ENCODE measurements at regions of chr15 and their contacts with region 1.

Region 1: DNA sequence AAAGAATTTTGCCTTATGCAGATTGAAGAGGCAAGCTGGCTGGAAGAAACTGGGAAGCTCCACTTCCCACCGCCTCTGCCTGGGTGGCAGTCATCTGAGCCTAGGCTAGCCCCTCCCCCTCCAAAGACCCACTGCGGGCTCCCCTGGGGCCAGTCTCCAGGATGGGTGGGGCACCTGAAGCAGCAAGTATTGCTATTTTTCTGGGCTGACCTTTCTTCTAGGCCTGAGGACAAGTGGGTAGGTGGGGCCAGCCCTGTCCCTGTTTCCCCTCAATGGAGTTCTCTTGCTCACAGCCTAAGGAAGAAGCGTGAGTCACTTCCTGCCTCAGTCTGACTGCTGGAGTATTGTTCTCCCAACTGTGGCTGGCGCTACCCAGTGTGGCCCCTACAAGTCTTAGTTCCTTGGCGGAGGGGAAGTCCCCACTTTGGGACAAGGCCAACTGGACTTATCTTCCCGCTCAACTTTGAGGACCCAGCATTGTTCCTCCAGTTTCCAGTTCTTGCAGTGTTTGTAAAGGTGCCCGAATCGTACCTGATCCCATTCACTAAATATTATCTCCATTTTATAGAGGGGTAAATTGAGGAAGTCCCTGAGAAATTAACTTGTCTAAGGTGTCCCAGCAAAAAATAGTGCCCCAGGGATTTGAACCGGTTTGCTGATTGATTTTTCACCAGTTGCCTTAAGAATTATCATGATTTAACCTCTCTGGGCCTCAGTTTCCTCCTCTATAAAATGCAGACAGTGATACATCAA is 1.4 kb downstream of the FURIN start:
- DNase-seq: peak in 1 of 2 experiments; percentile 76
- H3K4me3 ChIP-seq: no peak overlapping the region
- H3K27ac ChIP-seq: peak overlapping the region; percentile 16; the same call in 1 of the 2 replicates
- H3K4me1 ChIP-seq: peaks cover 23 to 47% (median 30%) of the 10 kb centered on the region in 4 experiments
- H3K27me3 ChIP-seq: no peaks in the 10 kb centered on the region
- CTCF ChIP-seq: no peak
- EP300 ChIP-seq: no peak
- POLR2A ChIP-seq: no peak
- RAD21 ChIP-seq: no peak

Region 2: GRCh38 chr15:90839187-90840071 is 30.3 kb before region 1 on chr15:
- CTCF ChIA-PET with region 1: interaction called, 5 read pairs
- POLR2A ChIA-PET with region 1: interaction called, 12 read pairs
- DNase-seq: peak; percentile 75 to 85
- H3K4me3 ChIP-seq: peak overlapping the region in 3 of 4 experiments; percentile 15 to 30 (median 26); a peak in 3 of 8 replicates
- H3K27ac ChIP-seq: no peak overlapping the region
- H3K4me1 ChIP-seq: peaks cover 6 to 21% (median 18%) of the 10 kb centered on the region in 4 experiments
- H3K27me3 ChIP-seq: no peaks in the 10 kb centered on the region
- CTCF ChIP-seq: no peak; a peak in 1 of 4 replicates
- EP300 ChIP-seq: no peak; a peak in 1 of 3 replicates
- POLR2A ChIP-seq: 0 out of 3 replicates have a peak, but pooled peaks of 1 of the 2 experiments have one; percentile 34
- RAD21 ChIP-seq: no peak; a peak in 1 of 4 replicates

Region 3: GRCh38 chr15:90851114-90851513 is 18.7 kb before region 1 on chr15:
- CTCF ChIA-PET with region 1: interaction called, 12 read pairs
- POLR2A ChIA-PET with region 1: interaction called, 3 read pairs
- DNase-seq: no peak
- H3K4me3 ChIP-seq: no peak overlapping the region
- H3K27ac ChIP-seq: no peak overlapping the region
- H3K4me1 ChIP-seq: no peaks in the 10 kb centered on the region
- H3K27me3 ChIP-seq: no peaks in the 10 kb centered on the region
- CTCF ChIP-seq: no peak
- EP300 ChIP-seq: no peak
- POLR2A ChIP-seq: no peak
- RAD21 ChIP-seq: no peak

Region 4: DNA sequence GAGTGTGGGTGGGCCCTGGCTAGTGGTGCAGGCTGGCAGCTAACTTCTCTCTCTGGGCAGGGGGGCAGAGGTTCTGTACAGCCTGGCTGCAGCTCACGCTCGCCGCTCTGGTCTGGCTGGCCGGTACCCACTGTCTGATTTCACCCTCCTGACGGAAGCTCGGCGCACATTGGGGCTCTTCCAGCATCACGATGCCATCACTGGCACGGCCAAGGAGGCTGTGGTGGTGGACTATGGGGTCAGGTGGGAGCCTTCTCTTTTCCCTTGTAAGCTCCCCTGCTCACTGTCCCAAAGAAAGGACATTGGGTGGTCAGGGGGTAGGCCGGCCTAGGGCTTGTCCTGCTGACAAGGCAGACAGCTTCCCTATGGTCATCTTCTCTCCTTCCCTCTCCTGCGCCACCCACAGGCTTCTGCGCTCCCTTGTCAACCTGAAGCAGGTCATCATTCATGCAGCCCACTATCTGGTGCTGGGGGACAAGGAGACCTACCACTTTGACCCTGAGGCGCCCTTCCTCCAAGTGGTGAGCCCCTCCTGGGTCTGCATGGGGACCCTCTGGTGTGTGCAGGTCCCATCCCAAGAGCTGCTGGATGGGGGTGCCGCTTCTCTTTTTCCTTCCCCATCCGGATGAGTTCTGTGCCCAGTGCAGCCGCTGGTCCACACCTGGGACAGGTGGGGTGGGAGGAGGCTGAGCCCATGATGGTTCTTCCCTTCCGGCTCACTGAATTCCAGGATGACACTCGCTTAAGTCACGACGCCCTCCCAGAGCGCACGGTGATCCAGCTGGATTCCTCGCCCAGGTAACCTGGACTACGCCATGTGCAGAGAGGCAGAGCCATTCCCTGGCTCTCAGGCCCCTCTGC is 40.9 kb after region 1 on chr15:
- CTCF ChIA-PET with region 1: no interaction called
- POLR2A ChIA-PET with region 1: no interaction called
- DNase-seq: no peak
- H3K4me3 ChIP-seq: no peak overlapping the region
- H3K27ac ChIP-seq: no peak overlapping the region
- H3K4me1 ChIP-seq: no peaks in the 10 kb centered on the region
- H3K27me3 ChIP-seq: no peaks in the 10 kb centered on the region
- CTCF ChIP-seq: no peak
- EP300 ChIP-seq: no peak
- POLR2A ChIP-seq: no peak
- RAD21 ChIP-seq: no peak

Region 5: DNA sequence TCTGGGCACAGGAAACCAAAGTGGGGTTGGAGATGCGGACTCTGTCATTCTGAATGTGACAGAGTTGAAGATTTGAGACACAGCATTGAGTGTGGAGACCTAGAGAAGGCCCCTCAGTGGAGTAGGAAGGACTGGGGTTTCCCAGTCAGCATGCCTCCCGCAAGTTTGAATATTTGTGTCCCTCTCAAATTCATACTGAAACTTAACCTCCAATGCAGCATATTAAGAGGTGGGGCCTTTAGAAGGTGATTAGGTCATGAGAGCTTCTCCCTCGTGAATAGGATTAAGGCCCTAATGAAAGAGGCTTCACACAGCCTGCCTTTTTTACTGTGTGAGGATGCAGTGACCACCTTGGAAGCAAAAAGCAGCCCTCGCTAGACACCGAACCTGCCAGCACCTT is 54.6 kb after region 1 on chr15:
- CTCF ChIA-PET with region 1: no interaction called
- POLR2A ChIA-PET with region 1: no interaction called
- DNase-seq: no peak
- H3K4me3 ChIP-seq: no peak overlapping the region
- H3K27ac ChIP-seq: no peak overlapping the region
- H3K4me1 ChIP-seq: no peaks in the 10 kb centered on the region
- H3K27me3 ChIP-seq: no peaks in the 10 kb centered on the region; a peak in 1 of 7 replicates
- CTCF ChIP-seq: no peak
- EP300 ChIP-seq: no peak
- POLR2A ChIP-seq: no peak
- RAD21 ChIP-seq: no peak

Region 6: GRCh38 chr15:91047545-91048199 is 177.9 kb after region 1 on chr15:
- CTCF ChIA-PET with region 1: no interaction called
- POLR2A ChIA-PET with region 1: no interaction called
- DNase-seq: no peak
- H3K4me3 ChIP-seq: no peak overlapping the region
- H3K27ac ChIP-seq: no peak overlapping the region
- H3K4me1 ChIP-seq: no peaks in the 10 kb centered on the region
- H3K27me3 ChIP-seq: no peaks in the 10 kb centered on the region; a peak in 1 of 7 replicates
- CTCF ChIP-seq: no peak
- EP300 ChIP-seq: no peak
- POLR2A ChIP-seq: no peak
- RAD21 ChIP-seq: no peak

Region 7: DNA sequence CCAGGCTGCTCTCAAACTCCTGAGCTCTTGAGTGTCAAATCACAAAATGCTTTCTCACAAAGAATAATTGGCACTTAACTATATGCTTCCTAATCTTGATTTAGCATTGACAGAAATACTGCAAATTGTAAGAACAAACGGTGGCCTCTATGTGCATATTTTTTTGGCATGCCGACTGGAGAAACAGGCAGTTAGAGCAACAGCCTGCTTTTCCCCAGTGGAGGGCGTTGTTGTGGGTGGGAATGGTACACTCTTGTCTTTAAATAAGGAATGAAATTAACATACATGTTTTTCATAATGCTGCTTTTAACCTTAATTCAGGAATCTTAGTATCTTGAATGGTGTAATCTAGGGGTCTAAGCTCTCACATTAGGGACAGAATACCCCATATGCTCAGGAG is 199.2 kb after region 1 on chr15:
- CTCF ChIA-PET with region 1: no interaction called
- POLR2A ChIA-PET with region 1: no interaction called
- DNase-seq: no peak
- H3K4me3 ChIP-seq: no peak overlapping the region
- H3K27ac ChIP-seq: no peak overlapping the region
- H3K4me1 ChIP-seq: no peaks in the 10 kb centered on the region
- H3K27me3 ChIP-seq: no peaks in the 10 kb centered on the region; a peak in 1 of 7 replicates
- CTCF ChIP-seq: peak; percentile 38 to 48 (median 45)
- EP300 ChIP-seq: no peak
- POLR2A ChIP-seq: no peak
- RAD21 ChIP-seq: peak; percentile 32 to 42; a peak in 2 of 4 replicates